GM10248 (cell line): ENCODE measurements at regions of chr15 and their contacts with region 1.

Region 1: GRCh38 chr15:51622604-51623370 is at the start of gene DMXL2:
- DNase-seq: peak; percentile 79
- CTCF ChIP-seq: no peak

Region 2: GRCh38 chr15:51536965-51537574 is 85.7 kb before region 1 on chr15:
- CTCF ChIA-PET with region 1: interaction called, 13 read pairs
- POLR2A ChIA-PET with region 1: no interaction called
- DNase-seq: peak; percentile 10
- CTCF ChIP-seq: peak; percentile 55